Natural killer cell (primary cell): ENCODE measurements at regions of chr2 and their contacts with region 1.

Region 1: DNA sequence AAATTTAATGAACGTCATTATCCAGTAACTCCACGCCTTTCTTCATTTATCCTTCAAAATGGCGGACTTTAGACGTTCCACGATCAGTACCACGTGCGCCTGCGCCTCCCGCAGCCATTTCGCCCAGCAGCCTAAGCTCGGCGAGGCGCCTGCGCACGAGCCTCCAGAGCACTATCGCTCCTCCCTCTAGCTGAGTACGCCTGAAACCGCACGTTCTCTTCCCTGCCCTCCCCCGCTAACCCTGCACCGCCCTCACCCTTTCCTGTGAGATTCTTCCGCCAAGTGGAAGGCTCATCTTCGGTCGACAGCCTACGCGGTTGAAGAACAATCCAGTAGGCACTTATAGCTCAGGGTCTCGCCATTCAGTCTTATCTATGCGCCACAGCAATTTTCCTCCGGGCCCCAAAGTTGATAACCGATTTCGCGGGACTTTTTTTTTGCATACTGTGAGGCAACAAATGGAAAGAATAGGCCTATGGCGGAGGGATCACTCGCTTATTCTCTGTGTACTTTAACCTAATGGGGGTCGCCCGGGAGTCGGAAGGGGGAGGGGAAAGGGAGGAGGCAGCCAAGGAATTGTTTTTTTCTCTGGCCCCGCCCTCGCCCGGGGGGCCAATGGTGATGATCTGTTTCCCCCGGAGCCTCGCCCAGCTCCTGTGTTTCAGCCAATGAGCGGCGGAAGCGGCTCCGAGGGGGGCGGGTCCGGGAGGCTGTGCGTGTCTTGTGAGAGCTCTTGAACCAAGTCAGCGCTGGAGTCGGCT is at the start of gene KDM3A:
- DNase-seq: peak; percentile 98 to 99
- ATAC-seq: peak; percentile 75 to 91 (median 79)
- H3K4me3 ChIP-seq: peak within 1 kb of the TSS; percentile 61
- H3K4me3 Mint-ChIP-seq: peak within 1 kb of the TSS; percentile 97
- H3K27ac ChIP-seq: peak within 1 kb of the TSS; percentile 88
- H3K27ac Mint-ChIP-seq: peak within 1 kb of the TSS; percentile 97
- H3K4me1 ChIP-seq: peaks cover 19% of the 10 kb centered on the region
- H3K4me1 Mint-ChIP-seq: peaks cover 51% of the 10 kb centered on the region in 2 donors
- H3K27me3 ChIP-seq: no peaks in the 10 kb centered on the region
- H3K27me3 Mint-ChIP-seq: peaks cover 13 to 20% of the 10 kb centered on the region in 2 donors
- CTCF ChIP-seq: no peak
- total RNA-seq, gene KDM3A: 172 to 195 (median 188) TPM

Region 2: GRCh38 chr2:86195055-86195807 is 245.6 kb before region 1 on chr2 and contains the start of gene IMMT:
- intact Hi-C with region 1: loop called (anchors 1 kb)
- DNase-seq: peak; percentile 86 to 97
- ATAC-seq: peak; percentile 88 to 97 (median 91)
- H3K4me3 ChIP-seq: peak within 1 kb of the TSS; percentile 99
- H3K4me3 Mint-ChIP-seq: peak within 1 kb of the TSS; percentile 97
- H3K27ac ChIP-seq: peak within 1 kb of the TSS; percentile 98
- H3K27ac Mint-ChIP-seq: peak within 1 kb of the TSS; percentile 97
- H3K4me1 ChIP-seq: peaks cover 27% of the 10 kb centered on the region
- H3K4me1 Mint-ChIP-seq: peaks cover 54 to 61% of the 10 kb centered on the region in 2 donors
- H3K27me3 ChIP-seq: no peaks in the 10 kb centered on the region
- H3K27me3 Mint-ChIP-seq: no peaks in the 10 kb centered on the region
- CTCF ChIP-seq: no peak
- total RNA-seq, gene IMMT: 54.5 to 62.6 (median 59.0) TPM

Region 3: DNA sequence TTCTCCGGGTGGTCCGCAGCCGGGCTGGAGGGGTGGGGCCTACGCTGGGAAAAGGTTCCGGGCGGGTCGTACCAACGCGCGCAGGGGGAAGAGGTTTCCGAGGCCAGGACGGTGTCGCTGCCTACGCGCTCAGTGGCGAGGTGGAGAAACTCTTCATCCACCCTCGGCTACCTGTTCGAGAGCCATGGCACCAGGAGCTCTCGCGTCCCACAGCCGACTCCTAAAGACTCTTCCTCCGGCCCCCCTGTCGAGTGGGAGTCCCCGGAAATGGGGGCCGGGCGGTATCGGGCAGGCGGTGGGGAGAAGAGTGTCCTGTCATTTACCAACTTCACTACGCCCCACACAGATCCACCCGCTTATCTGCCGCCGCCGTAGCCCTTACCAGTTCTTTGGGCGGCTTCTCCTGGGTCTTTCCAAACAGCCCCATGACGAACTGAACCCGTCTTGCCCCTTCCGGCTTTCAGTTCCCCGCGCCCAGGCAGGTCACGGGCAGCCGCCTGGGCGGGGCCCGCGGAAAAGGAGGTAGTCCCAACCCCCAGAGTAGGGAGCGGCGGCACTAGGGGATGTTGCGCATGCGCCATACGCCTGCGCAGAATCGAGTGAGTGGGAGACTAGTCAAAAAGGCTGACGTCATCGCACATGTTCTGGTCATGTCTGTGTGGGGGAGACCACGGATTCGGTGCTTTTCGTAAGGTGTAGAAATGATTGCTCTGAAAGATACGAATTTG is 122.3 kb after region 1 on chr2 and contains the start of gene CHMP3:
- intact Hi-C with region 1: loop called (anchors 1 kb)
- DNase-seq: peak; percentile 95 to 100
- ATAC-seq: peak; percentile 86 to 94 (median 88)
- H3K4me3 ChIP-seq: peak within 1 kb of the TSS; percentile 92
- H3K4me3 Mint-ChIP-seq: peak within 1 kb of the TSS; percentile 96
- H3K27ac ChIP-seq: peak within 1 kb of the TSS; percentile 99
- H3K27ac Mint-ChIP-seq: peak within 1 kb of the TSS; percentile 96 to 99
- H3K4me1 ChIP-seq: peaks cover 11% of the 10 kb centered on the region
- H3K4me1 Mint-ChIP-seq: peaks cover 28 to 34% of the 10 kb centered on the region in 2 donors
- H3K27me3 ChIP-seq: peaks cover 3% of the 10 kb centered on the region
- H3K27me3 Mint-ChIP-seq: peaks cover 3 to 21% of the 10 kb centered on the region in 2 donors
- CTCF ChIP-seq: no peak
- total RNA-seq, gene CHMP3: 47.4 to 50.3 (median 49.3) TPM

Region 4: GRCh38 chr2:86623651-86624541 is 183.1 kb after region 1 on chr2 and contains the start of gene RNF103:
- intact Hi-C with region 1: loop called (anchors 2 kb)
- DNase-seq: peak; percentile 91 to 94
- ATAC-seq: peak; percentile 84 to 93 (median 85)
- H3K4me3 ChIP-seq: peak within 1 kb of the TSS; percentile 97
- H3K4me3 Mint-ChIP-seq: peak within 1 kb of the TSS; percentile 93
- H3K27ac ChIP-seq: peak within 1 kb of the TSS; percentile 98
- H3K27ac Mint-ChIP-seq: peak within 1 kb of the TSS; percentile 84 to 95
- H3K4me1 ChIP-seq: peaks cover 9% of the 10 kb centered on the region
- H3K4me1 Mint-ChIP-seq: peaks cover 28 to 44% of the 10 kb centered on the region in 2 donors
- H3K27me3 ChIP-seq: no peaks in the 10 kb centered on the region
- H3K27me3 Mint-ChIP-seq: peaks cover 3 to 21% of the 10 kb centered on the region in 2 donors
- CTCF ChIP-seq: no peak
- total RNA-seq, gene RNF103: 52.9 to 74.2 (median 70.9) TPM

Region 5: DNA sequence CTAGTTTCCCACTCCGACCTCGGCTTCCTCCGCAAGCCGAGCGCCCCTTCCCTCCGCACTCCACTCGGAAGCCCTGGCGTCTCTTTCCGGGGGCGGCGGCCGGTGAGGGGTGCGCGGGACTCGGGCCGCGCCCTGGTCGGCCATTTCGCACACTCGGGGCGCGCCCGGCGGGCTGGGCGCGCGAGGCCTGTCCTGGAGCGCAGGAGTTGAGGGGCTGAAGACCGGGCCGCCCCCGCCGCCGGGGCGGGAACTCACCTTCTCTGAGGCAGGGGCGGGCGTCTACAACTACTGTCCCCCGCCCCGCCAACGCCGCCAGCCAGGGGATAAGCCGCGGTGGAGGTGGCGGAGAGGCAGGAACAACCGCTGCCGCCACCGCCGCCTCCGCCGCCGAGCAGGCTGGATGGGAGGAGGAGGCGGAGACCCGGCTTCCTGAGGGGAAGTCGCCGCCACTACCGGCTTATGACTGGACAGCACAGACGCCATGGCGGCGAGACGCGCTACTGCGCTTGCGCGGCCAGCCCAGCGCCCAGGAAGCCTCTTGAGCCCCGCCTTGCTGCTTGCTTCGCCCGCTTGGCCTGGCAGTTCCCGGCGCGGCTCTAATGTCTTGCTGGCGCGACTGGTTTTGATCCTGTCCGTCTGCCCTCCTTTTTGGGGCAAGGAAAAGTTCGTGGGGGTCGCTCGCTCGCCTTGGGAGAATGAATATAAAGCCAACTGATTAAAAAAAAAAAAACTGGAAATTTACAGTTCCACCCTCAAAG is 1614.7 kb after region 1 on chr2 and contains the start of gene KRCC1:
- intact Hi-C with region 1: loop called (anchors 2 kb)
- DNase-seq: peak; percentile 91 to 98
- ATAC-seq: peak; percentile 93 to 97 (median 94)
- H3K4me3 ChIP-seq: peak within 1 kb of the TSS; percentile 65
- H3K4me3 Mint-ChIP-seq: peak within 1 kb of the TSS; percentile 94
- H3K27ac ChIP-seq: peak within 1 kb of the TSS; percentile 87
- H3K27ac Mint-ChIP-seq: peak within 1 kb of the TSS; percentile 90 to 99
- H3K4me1 ChIP-seq: peaks cover 16% of the 10 kb centered on the region
- H3K4me1 Mint-ChIP-seq: peaks cover 41 to 42% of the 10 kb centered on the region in 2 donors
- H3K27me3 ChIP-seq: no peaks in the 10 kb centered on the region
- H3K27me3 Mint-ChIP-seq: no peaks in the 10 kb centered on the region
- CTCF ChIP-seq: no peak
- total RNA-seq, gene KRCC1: 9.0 to 17.0 (median 10.5) TPM